ENCODE measurements at regions of chr18 and their contacts with region 1.

Region 1: DNA sequence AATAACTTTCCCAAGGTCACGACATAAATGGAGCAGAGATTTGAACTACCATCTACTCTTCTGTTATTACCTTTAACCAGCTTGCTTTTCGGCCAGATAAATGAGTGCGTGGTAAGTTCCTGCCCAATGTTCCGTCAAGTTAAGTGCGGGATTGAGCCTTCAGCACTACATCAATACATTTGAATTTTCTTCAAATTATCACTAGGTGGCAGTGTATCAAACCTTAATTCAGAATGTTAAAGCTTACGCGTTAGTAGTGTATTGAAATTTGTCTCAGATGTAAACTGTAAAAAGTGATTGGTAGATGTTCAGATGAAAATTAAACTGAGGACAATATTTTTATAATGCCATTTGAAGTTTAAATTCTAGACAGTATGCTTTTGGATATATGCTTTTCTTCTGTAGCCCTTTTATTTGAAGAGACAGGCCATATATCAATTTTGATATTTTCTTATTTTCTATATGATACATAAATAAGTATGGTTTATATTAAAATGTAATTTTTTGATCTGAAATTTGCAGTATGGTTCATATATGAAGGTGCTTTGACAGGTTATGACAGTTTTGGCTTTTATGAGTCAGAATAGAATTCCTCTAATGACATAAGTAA is 681.3 kb downstream of the ADCYAP1 start:
- DNase-seq: no peak
- ATAC-seq: no peak
- H3K4me3 Mint-ChIP-seq: no peak overlapping the region
- H3K27ac Mint-ChIP-seq: no peak overlapping the region
- H3K4me1 Mint-ChIP-seq: no peaks in the 10 kb centered on the region
- H3K27me3 Mint-ChIP-seq: peaks cover 5% of the 10 kb centered on the region
- CTCF ChIP-seq: peak; percentile 70

Region 2: DNA sequence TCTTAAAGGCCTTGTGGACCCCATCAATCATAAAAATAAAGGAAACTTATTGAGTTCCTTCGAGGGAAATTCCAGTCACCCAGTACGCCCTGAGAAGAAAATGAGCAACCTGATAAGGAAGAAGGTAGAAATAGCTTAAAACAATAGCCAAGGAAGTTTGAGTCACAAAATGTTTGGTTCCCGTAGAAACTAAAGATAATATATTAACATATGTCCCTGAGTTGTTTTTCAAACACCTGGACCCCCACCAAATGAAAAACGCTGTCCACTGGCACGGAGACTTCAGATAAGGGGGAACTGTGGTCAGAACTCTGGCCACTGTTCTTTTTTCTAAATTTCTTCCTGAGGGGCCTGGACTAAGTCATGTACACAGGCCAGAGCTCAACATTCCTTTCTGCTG is 12.3 kb before region 1 on chr18:
- CTCF ChIA-PET with region 1: interaction called, 14 read pairs
- POLR2A ChIA-PET with region 1: no interaction called
- intact Hi-C with region 1: no loop called
- DNase-seq: no peak
- ATAC-seq: no peak
- H3K4me3 Mint-ChIP-seq: no peak overlapping the region
- H3K27ac Mint-ChIP-seq: no peak overlapping the region
- H3K4me1 Mint-ChIP-seq: no peaks in the 10 kb centered on the region
- H3K27me3 Mint-ChIP-seq: no peaks in the 10 kb centered on the region
- CTCF ChIP-seq: no peak

Region 3: DNA sequence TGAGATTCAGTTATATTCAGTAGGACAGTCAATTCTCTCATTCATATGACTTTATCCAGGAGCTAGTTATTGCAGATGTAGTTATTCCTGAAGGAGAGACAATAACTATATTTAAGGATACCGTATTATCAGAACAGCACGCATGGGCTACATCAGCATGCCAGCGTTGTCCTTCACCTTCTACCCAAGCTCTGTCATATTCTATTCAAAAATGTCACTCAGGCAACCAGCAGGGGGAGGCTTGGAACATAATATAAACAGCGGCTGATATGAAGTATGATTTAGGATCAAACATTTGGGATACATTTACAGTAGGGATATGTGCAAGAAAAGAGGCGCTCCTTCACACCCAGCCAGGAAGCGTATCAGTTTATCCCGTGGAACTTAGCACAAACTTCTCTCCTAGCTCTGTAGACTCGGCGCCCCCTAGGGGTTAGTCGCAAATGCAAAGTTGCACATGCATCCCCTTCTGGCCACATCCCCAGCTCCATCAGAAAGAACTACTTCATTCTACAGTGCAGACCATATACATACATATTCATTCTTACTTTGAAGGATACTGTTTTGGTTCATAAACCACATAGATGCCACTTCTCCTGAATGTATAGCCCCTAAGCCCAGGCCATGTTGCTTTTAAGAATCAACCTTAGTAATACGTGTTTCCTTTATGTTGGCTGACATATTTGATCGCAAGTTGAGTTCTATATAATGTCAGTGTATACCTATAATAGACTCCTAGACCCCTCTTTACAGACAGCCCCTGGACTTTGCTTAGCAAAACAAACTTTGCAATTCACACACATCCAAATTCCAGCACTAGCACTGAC is 78.1 kb after region 1 on chr18:
- CTCF ChIA-PET with region 1: no interaction called
- POLR2A ChIA-PET with region 1: no interaction called
- intact Hi-C with region 1: no loop called
- DNase-seq: peak; percentile 57
- ATAC-seq: no peak
- H3K4me3 Mint-ChIP-seq: no peak overlapping the region
- H3K27ac Mint-ChIP-seq: no peak overlapping the region
- H3K4me1 Mint-ChIP-seq: no peaks in the 10 kb centered on the region
- H3K27me3 Mint-ChIP-seq: no peaks in the 10 kb centered on the region
- CTCF ChIP-seq: peak; percentile 70